ENCODE measurements at regions of chr17 and their contacts with region 1.

Region 1: DNA sequence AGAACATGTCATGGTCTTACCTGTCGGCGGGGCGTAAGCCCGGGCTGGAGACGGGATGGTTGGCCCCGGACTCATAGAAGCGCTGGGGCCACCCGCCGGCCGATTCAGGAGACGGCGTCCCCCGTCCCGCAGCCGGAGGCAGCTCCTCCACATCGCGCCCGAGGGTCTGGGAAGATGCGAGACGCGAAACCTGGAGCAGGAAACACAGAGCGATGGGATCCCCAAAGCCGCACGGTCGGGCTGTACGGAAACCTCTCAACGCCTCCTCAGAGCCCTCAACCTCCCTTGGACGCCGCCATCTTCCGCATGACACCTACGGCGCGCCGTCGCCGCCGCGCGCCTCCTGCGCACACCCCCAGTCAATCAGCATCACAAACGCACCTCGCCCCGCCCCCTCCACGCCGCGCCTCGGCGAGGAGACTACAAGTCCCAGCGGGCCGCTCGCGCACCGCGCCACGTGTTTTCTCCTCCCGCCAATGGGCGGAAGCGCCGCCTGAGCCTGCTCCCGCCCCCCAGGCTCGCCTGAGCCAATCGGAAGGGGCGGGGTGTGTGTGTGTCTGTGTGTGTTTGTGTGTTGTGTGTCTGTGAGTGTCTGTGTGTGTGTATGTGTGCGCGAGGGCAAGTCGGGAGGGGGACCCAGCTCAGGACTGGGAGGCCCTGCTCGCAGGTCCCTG is at the starts of genes ATPAF2 and GID4:
- DNase-seq: peak; percentile 100
- ATAC-seq: peak; percentile 93 to 94 (median 93)
- H3K4me3 ChIP-seq: peak within 1 kb of the TSS; percentile 90
- H3K27ac ChIP-seq: peak within 1 kb of the TSS; percentile 90
- H3K4me1 ChIP-seq: peaks cover 39% of the 10 kb centered on the region
- H3K27me3 ChIP-seq: no peaks in the 10 kb centered on the region
- CTCF ChIP-seq: no peak
- total RNA-seq, gene ATPAF2: 23.9 to 39.7 (median 30.4) TPM
- total RNA-seq, gene GID4: 22.4 to 39.6 (median 38.5) TPM

Region 2: DNA sequence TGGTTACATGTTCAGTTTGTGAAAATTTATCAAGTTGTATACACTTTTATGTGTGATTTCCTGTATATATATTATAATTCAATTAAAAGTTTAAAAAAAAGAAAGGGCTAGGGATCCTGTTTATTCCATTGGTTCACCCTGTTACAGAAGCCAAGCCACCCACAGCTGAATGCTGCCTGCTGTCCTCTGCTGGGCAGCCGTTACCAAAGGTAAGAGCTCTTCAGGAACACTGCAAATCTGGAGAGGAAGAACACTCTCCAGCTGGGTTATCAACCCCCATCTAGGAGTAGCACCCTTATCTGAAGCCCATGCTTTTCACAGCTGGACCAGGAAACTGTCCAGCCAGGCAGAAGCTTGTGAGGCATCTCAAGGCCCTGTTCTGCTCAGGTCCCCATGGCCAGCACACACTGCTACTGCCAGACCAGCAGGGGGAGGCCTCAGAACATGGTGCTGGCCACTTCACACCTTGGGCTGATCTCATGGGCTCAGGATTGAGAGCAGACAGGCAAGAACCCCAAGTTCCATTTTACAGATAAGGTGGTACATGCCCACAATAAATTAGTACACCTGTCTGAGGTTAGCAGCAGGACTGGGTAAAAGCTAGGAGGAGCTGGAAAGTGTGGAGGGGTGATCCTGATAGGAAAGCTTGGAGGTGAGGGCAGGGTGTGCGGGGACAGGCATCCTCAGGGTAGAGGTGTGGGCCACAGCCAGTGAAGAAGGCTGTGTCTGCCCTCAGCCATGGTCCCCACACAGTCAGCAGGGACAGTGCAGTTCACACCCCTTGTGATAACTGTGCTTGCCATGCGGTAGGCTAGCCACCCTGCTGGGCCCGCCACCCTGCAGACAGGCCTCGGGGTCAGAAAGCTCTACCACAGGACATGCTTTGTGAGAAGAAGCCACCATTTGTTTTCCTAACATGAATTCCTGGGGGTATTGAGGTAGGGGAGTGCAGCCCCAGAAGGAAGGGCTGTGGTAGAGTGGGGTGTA is 147.9 kb before region 1 on chr17:
- intact Hi-C with region 1: loop called (anchors 5 to 10 kb)
- DNase-seq: peak; percentile 34 to 59
- ATAC-seq: peak; percentile 50 to 85 (median 76)
- H3K4me3 ChIP-seq: no peak overlapping the region
- H3K27ac ChIP-seq: no peak overlapping the region
- H3K4me1 ChIP-seq: peaks cover 9% of the 10 kb centered on the region
- H3K27me3 ChIP-seq: no peaks in the 10 kb centered on the region
- CTCF ChIP-seq: peak; percentile 69

Region 3: DNA sequence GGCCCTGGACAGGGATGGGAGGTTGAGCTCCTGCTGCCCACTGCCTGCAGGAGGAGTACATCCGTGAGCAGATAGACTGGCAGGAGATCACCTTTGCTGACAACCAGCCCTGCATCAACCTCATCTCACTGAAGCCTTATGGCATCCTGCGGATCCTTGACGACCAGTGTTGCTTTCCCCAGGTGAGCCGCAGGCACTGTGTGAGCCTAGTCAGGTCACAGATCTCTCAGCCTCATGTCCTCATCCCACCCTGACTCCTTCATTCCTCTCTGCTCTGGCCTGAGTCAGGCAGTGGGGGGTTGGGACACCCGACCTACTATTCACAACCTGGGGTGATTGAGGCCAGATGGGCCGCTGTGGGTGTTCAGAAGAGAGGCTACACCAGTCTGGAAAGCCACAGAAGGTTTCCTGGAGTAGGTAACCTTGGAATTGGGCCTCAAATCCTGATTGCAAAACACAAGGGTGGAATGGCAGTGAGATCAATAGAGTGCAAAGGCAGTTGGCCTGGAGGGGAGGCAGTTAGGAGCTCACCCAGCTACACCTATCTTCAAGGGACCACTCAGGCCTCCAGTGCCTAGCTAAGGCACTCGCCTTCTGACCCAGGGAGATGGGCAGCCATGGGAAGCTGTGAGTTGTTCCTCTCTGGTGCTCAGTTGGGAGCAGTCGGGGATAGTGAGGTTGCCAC is 99.2 kb after region 1 on chr17:
- intact Hi-C with region 1: no loop called
- DNase-seq: no peak
- ATAC-seq: no peak
- H3K4me3 ChIP-seq: no peak overlapping the region
- H3K27ac ChIP-seq: no peak overlapping the region
- H3K4me1 ChIP-seq: no peaks in the 10 kb centered on the region
- H3K27me3 ChIP-seq: no peaks in the 10 kb centered on the region
- CTCF ChIP-seq: no peak

Measured in psoas muscle (tissue), 8 donors.